ENCODE measurements at regions of chr2 and their contacts with region 1.

Region 1: GRCh38 chr2:109510136-109511028 is 103.4 kb downstream of the SEPTIN10 start:
- DNase-seq: peak; percentile 66 to 84 (median 77)
- ATAC-seq: peak; percentile 85 to 94 (median 90)
- H3K4me3 ChIP-seq: no peak overlapping the region
- H3K27ac ChIP-seq: no peak overlapping the region
- H3K4me1 ChIP-seq: peaks cover 0 to 15% (median 3%) of the 10 kb centered on the region in 4 donors
- H3K27me3 ChIP-seq: no peaks in the 10 kb centered on the region
- CTCF ChIP-seq: peak; percentile 86 to 91 (median 87)
- POLR2A ChIP-seq: no peak

Region 2: DNA sequence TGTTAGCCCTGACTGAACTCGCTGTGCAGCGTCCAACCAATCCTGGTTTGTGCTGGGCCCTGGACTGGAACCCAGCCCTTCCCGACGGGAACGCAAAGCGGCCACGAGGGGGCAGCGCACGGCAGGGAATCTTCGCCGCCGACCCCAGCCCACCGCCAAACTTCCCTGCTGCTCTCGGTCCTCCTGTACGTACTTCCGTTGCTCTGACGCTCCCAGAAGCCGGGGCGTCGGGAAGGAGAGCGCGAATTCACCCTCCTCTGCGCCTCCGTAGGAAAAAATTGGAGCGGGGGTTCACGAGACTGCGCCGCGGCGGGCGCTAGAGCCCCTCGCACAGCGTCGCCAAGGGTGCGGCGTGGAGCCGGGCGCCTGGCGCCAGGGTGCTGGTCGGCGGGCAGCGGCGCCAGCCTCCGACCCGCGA is 382.3 kb before region 1 on chr2:
- intact Hi-C with region 1: loop called (anchors 5 kb)
- DNase-seq: peak; percentile 76 to 80 (median 76)
- ATAC-seq: peak; percentile 82 to 89 (median 86)
- H3K4me3 ChIP-seq: peak overlapping the region; percentile 49 to 60 (median 54)
- H3K27ac ChIP-seq: peak overlapping the region; percentile 31 to 69 (median 35)
- H3K4me1 ChIP-seq: peaks cover 0 to 19% (median 0%) of the 10 kb centered on the region in 4 donors
- H3K27me3 ChIP-seq: peaks cover 0 to 10% of the 10 kb centered on the region in 2 donors
- CTCF ChIP-seq: peak; percentile 87 to 92 (median 91)
- POLR2A ChIP-seq: no peak